Caco-2 (cell line): ENCODE measurements at regions of chr10 and their contacts with region 1.

Region 1: DNA sequence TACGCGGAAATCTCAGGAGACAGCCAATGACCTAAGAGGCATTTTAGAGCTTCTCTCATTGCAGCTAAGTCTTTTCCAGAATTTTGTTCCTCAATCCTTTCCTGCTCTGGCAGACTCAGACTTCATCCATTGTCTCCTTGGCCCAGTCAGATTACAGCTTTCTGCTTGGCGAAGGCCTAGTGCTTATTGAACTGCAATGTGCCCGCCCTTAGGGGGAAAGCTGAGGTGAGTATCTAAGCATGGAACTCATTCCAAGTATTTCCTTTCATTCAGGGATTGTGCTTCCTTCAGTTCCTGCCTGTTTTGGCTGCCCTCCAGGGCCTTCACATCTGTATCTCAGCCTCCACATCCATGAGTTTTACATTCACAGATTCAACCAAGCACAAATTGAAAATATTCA is 37.5 kb downstream of the PRLHR start:
- DNase-seq: no peak
- H3K4me3 ChIP-seq: no peak overlapping the region
- H3K4me3 Mint-ChIP-seq: no peak overlapping the region
- H3K27ac Mint-ChIP-seq: no peak overlapping the region
- H3K4me1 ChIP-seq: no peaks in the 10 kb centered on the region
- H3K4me1 Mint-ChIP-seq: no peaks in the 10 kb centered on the region
- H3K27me3 ChIP-seq: no peaks in the 10 kb centered on the region
- H3K27me3 Mint-ChIP-seq: peaks cover 22% of the 10 kb centered on the region
- CTCF ChIP-seq: no peak

Region 2: GRCh38 chr10:118511711-118512110 is 46.2 kb before region 1 on chr10:
- CTCF ChIA-PET with region 1: no interaction called
- POLR2A ChIA-PET with region 1: no interaction called
- intact Hi-C with region 1: loop called (anchors 1 kb)
- DNase-seq: no peak
- H3K4me3 ChIP-seq: no peak overlapping the region
- H3K4me3 Mint-ChIP-seq: no peak overlapping the region
- H3K27ac Mint-ChIP-seq: no peak overlapping the region
- H3K4me1 ChIP-seq: no peaks in the 10 kb centered on the region
- H3K4me1 Mint-ChIP-seq: no peaks in the 10 kb centered on the region
- H3K27me3 ChIP-seq: no peaks in the 10 kb centered on the region
- H3K27me3 Mint-ChIP-seq: peaks cover 7% of the 10 kb centered on the region
- CTCF ChIP-seq: no peak

Region 3: DNA sequence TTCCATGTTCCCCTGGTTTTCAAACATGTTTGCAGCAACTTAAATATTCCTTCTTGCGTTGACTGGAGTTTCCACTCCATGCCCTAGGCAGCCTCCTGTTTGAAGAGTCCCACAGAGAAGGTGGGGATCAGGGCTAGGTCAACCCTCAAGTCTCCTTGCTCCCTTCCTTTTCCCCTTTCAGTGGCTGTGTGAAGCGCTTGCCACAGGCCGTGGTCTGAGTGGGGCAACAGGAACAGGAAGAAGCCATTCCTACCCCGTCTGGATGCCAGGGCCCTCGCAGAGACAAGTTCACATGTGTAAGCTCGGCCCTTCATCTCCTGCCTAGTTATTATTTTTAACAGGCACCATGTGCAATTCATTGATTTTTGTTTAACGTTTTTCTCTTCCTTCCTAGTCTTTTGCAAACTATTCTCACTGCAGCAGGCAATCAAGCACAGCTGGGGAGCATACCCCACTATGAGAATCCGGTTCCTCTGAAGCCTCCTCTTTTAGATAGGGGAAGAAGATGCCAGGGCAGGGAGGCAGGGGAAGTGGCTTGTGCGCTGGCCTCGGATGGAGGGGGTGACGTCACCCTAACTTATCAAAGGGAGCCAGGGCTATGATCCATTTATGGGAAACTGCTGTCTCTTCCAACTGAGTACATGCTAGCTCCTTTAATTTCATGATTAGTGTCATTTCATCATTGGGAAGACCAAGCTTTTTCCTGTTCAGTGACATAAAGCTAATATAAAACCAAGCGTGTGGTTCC is 26.7 kb before region 1 on chr10:
- CTCF ChIA-PET with region 1: no interaction called
- POLR2A ChIA-PET with region 1: no interaction called
- intact Hi-C with region 1: no loop called
- DNase-seq: no peak
- H3K4me3 ChIP-seq: no peak overlapping the region
- H3K4me3 Mint-ChIP-seq: no peak overlapping the region
- H3K27ac Mint-ChIP-seq: no peak overlapping the region
- H3K4me1 ChIP-seq: no peaks in the 10 kb centered on the region
- H3K4me1 Mint-ChIP-seq: no peaks in the 10 kb centered on the region
- H3K27me3 ChIP-seq: no peaks in the 10 kb centered on the region
- H3K27me3 Mint-ChIP-seq: peaks cover 3% of the 10 kb centered on the region
- CTCF ChIP-seq: no peak

Region 4: DNA sequence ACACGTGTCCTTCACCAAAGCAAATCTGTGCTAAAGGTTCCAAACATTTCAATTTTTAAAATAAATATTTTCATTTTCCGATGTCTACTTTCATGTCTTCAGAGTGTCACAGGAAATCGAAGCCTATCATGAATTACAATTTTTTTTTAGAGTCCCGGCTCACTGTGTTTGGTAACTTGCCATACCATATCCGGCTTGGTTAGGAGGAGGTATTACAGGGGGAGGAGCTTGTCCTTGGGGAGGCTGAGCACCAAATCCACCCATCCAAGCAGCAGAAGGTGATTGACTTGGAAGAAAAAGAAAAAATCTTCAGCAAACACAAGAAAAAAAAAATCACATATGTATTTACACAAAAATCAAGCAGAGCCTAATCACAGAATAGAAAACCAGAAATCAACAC is 1017.6 kb after region 1 on chr10:
- CTCF ChIA-PET with region 1: no interaction called
- POLR2A ChIA-PET with region 1: no interaction called
- intact Hi-C with region 1: no loop called
- DNase-seq: no peak
- H3K4me3 ChIP-seq: no peak overlapping the region
- H3K4me3 Mint-ChIP-seq: no peak overlapping the region
- H3K27ac Mint-ChIP-seq: no peak overlapping the region
- H3K4me1 ChIP-seq: no peaks in the 10 kb centered on the region
- H3K4me1 Mint-ChIP-seq: no peaks in the 10 kb centered on the region
- H3K27me3 ChIP-seq: no peaks in the 10 kb centered on the region
- H3K27me3 Mint-ChIP-seq: no peaks in the 10 kb centered on the region
- CTCF ChIP-seq: no peak